ENCODE measurements at regions of chr21 and their contacts with region 1.

Region 1: GRCh38 chr21:33293811-33294216 is 27.6 kb downstream of the IL10RB start:
- DNase-seq: no peak
- ATAC-seq: no peak
- H3K4me3 ChIP-seq: no peak overlapping the region
- H3K27ac ChIP-seq: no peak overlapping the region
- H3K4me1 ChIP-seq: peaks cover 0 to 24% (median 11%) of the 10 kb centered on the region in 12 donors
- H3K27me3 ChIP-seq: no peaks in the 10 kb centered on the region
- CTCF ChIP-seq: no peak
- POLR2A ChIP-seq: no peak

Region 2: GRCh38 chr21:33360881-33361602 is 67.2 kb after region 1 on chr21:
- intact Hi-C with region 1: loop called in 1 of 10 experiments (anchors 2 kb)
- DNase-seq: peak; percentile 74 to 86 (median 77)
- ATAC-seq: peak; percentile 74 to 86 (median 80)
- H3K4me3 ChIP-seq: peak overlapping the region in 11 of 12 donors; percentile 16 to 55 (median 36)
- H3K27ac ChIP-seq: peak overlapping the region in 11 of 12 donors; percentile 34 to 90 (median 58)
- H3K4me1 ChIP-seq: peaks cover 0 to 39% (median 20%) of the 10 kb centered on the region in 12 donors
- H3K27me3 ChIP-seq: no peaks in the 10 kb centered on the region
- CTCF ChIP-seq: peak; percentile 71 to 88 (median 82)
- POLR2A ChIP-seq: no peak

Measured in heart left ventricle (tissue), 16 donors.